Activated CD4-positive, alpha-beta T cell treated with anti-CD3 and anti-CD28 coated beads for 36 hours (primary cell): ENCODE measurements at regions of chr15 and their contacts with region 1.

Region 1: GRCh38 chr15:89129123-89129815 is 41.0 kb downstream of the ABHD2 start:
- DNase-seq: peak; percentile 75
- ATAC-seq: peak; percentile 25
- H3K4me3 Mint-ChIP-seq: no peak overlapping the region
- H3K27ac Mint-ChIP-seq: no peak overlapping the region
- H3K4me1 Mint-ChIP-seq: peaks cover 28% of the 10 kb centered on the region
- H3K27me3 Mint-ChIP-seq: no peaks in the 10 kb centered on the region

Region 2: DNA sequence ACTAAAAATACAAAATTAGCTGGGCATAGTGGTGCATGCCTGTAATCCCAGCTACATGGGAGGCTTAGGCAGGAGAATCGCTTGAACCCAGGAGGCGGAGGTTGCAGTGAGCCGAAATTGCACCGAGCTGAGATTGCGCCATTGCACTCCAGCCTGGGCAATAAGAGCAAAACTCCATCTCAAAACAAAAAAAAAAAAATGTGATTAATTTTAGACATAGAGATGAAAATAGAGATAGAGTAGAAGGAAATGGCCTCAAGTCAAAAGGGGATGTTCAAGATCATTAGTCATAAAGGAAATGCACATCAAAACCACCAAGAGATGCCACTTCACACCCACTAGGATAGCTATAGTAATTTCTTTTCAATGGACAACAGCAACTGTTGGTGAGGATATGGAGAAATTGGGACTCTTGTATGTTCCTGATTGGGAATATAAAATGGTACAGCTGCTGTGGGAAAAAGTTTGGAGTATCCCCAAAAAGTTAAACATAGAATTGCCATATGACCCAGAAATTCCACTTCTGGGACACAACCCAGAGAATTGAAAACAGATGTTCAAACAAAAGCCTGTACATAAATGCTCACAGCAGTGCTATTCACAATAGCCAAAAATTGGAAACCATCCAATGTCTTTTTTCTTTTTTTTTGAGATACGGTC is 14.4 kb after region 1 on chr15:
- CTCF ChIA-PET with region 1: interaction called, 17 read pairs
- POLR2A ChIA-PET with region 1: no interaction called
- intact Hi-C with region 1: no loop called
- DNase-seq: peak; percentile 20
- ATAC-seq: peak; percentile 95
- H3K4me3 Mint-ChIP-seq: no peak overlapping the region
- H3K27ac Mint-ChIP-seq: no peak overlapping the region
- H3K4me1 Mint-ChIP-seq: peaks cover 22% of the 10 kb centered on the region
- H3K27me3 Mint-ChIP-seq: no peaks in the 10 kb centered on the region

Region 3: GRCh38 chr15:89150762-89151664 is 21.7 kb after region 1 on chr15:
- CTCF ChIA-PET with region 1: interaction called, 12 read pairs
- POLR2A ChIA-PET with region 1: no interaction called
- intact Hi-C with region 1: no loop called
- DNase-seq: no peak
- ATAC-seq: no peak
- H3K4me3 Mint-ChIP-seq: no peak overlapping the region
- H3K27ac Mint-ChIP-seq: no peak overlapping the region
- H3K4me1 Mint-ChIP-seq: peaks cover 2% of the 10 kb centered on the region
- H3K27me3 Mint-ChIP-seq: no peaks in the 10 kb centered on the region